A549 (cell line): ENCODE measurements at regions of chr1 and their contacts with region 1.

Region 1: GRCh38 chr1:161792740-161793139 is 26.6 kb downstream of the ATF6 start:
- DNase-seq: peak; percentile 51 to 74
- ATAC-seq: peak; percentile 91 to 93
- H3K4me3 ChIP-seq: no peak overlapping the region
- H3K27ac ChIP-seq: no peak overlapping the region
- H3K4me1 ChIP-seq: peaks cover 4% of the 10 kb centered on the region; the same call in 1 of the 3 replicates
- CTCF ChIP-seq: peak; percentile 78
- EP300 ChIP-seq: no peak
- POLR2A ChIP-seq: no peak
- RAD21 ChIP-seq: peak; percentile 84 to 89

Region 2: DNA sequence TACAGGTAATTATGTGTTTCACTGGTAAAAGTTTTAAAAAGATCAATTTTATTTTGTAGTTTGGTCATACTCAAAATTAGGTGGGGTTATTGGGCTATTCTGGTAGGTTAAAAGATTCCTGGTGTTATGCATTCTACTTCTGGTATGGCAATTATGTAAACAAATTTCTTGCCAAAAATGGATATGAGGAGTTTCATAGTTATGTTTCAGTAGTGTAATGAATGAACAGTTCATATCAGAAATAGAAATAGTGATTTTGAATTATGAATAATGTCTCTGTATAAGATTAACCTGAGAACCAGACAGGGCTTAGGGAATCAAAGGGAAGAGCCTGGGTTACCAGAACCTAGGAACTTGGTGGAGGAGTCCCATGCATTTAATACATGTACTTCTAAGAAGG is 10.7 kb before region 1 on chr1:
- CTCF ChIA-PET with region 1: interaction called, 19 read pairs
- POLR2A ChIA-PET with region 1: no interaction called
- DNase-seq: no peak
- ATAC-seq: no peak
- H3K4me3 ChIP-seq: no peak overlapping the region
- H3K27ac ChIP-seq: no peak overlapping the region
- H3K4me1 ChIP-seq: peaks cover 4% of the 10 kb centered on the region; the same call in 1 of the 3 replicates
- CTCF ChIP-seq: no peak
- EP300 ChIP-seq: no peak
- POLR2A ChIP-seq: no peak
- RAD21 ChIP-seq: no peak

Region 3: DNA sequence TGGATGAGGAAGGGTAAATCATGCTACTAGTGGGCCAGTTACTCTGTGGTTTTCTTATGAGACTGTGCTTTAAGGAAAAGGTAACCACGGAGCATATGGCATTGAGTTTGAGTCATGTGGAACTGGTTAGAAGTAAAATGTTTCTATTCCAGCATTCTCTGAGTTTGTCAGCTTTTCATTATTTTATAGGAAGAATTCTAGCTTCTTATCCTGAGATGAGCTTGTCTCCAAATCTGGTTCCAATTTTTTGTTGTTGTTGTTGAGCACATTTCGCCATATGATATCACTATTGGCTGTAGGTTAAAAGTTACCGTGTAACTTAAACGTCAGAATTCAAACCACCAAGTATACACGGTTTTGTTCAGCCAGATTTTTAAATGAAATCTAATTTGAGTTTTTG is 43.3 kb after region 1 on chr1:
- CTCF ChIA-PET with region 1: no interaction called
- POLR2A ChIA-PET with region 1: no interaction called
- DNase-seq: no peak
- ATAC-seq: no peak
- H3K4me3 ChIP-seq: no peak overlapping the region
- H3K27ac ChIP-seq: no peak overlapping the region
- H3K4me1 ChIP-seq: no peaks in the 10 kb centered on the region
- CTCF ChIP-seq: no peak
- EP300 ChIP-seq: no peak
- POLR2A ChIP-seq: no peak
- RAD21 ChIP-seq: no peak

Region 4: GRCh38 chr1:161864577-161864976 is 71.8 kb after region 1 on chr1:
- CTCF ChIA-PET with region 1: interaction called, 13 read pairs
- POLR2A ChIA-PET with region 1: no interaction called
- DNase-seq: peak in 1 of 2 experiments; percentile 13
- ATAC-seq: no peak; a peak in 1 of 6 replicates
- H3K4me3 ChIP-seq: no peak overlapping the region
- H3K27ac ChIP-seq: no peak overlapping the region
- H3K4me1 ChIP-seq: no peaks in the 10 kb centered on the region
- CTCF ChIP-seq: no peak; the same call in 2 of the 3 replicates
- EP300 ChIP-seq: no peak
- POLR2A ChIP-seq: no peak
- RAD21 ChIP-seq: peak; percentile 28 to 35; a peak in 3 of 5 replicates

Region 5: DNA sequence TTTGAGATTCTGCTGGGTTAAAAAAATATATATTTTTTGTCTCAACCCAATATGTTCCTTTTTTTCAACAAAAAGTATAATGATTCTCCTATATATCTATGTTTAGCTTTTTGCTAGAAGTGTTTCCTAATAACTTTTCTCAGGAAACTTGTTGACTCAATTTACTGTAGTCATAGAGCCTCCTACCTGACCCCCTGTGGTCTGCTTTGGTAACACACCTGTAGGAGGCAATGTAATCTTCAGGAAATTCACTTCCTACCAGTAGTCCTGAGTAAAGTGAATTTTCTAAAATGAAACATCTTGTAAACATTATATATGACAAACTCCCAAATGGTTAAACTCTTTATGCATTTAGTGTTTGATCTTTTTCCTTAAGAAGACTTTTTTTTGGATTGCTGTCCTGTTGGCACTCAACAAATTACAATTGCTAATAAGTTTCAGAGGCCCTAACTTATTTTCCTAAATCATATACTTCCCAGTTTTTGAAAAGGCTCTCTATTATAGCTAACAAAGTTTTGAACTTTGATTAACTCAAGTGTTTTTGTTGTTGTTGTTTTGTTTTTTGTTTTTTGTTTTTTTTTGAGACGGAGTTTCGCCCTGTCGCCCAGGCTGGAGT is 112.6 kb after region 1 on chr1:
- CTCF ChIA-PET with region 1: interaction called, 10 read pairs
- POLR2A ChIA-PET with region 1: no interaction called
- DNase-seq: peak; percentile 29 to 50
- ATAC-seq: peak; percentile 80 to 81
- H3K4me3 ChIP-seq: no peak overlapping the region
- H3K27ac ChIP-seq: no peak overlapping the region
- H3K4me1 ChIP-seq: peaks cover 17% of the 10 kb centered on the region
- CTCF ChIP-seq: peak; percentile 44; the same call in 2 of the 3 replicates
- EP300 ChIP-seq: no peak
- POLR2A ChIP-seq: no peak
- RAD21 ChIP-seq: peak; percentile 28 to 36; a peak in 3 of 5 replicates

Region 6: GRCh38 chr1:162023547-162024501 is 231.1 kb after region 1 on chr1 and contains the start of gene OLFML2B:
- CTCF ChIA-PET with region 1: interaction called, 262 read pairs
- POLR2A ChIA-PET with region 1: no interaction called
- DNase-seq: peak; percentile 70 to 84
- ATAC-seq: peak; percentile 96 to 97
- H3K4me3 ChIP-seq: peak within 1 kb of the TSS; percentile 68
- H3K27ac ChIP-seq: peak within 1 kb of the TSS; percentile 53 to 80; a peak in 5 of 6 replicates
- H3K4me1 ChIP-seq: peaks cover 5% of the 10 kb centered on the region
- CTCF ChIP-seq: peak; percentile 45
- EP300 ChIP-seq: no peak
- POLR2A ChIP-seq: no peak
- RAD21 ChIP-seq: peak; percentile 48 to 61
- polyA plus RNA-seq, gene OLFML2B: 0.10 and 0.21 TPM in 2 replicates

Region 7: DNA sequence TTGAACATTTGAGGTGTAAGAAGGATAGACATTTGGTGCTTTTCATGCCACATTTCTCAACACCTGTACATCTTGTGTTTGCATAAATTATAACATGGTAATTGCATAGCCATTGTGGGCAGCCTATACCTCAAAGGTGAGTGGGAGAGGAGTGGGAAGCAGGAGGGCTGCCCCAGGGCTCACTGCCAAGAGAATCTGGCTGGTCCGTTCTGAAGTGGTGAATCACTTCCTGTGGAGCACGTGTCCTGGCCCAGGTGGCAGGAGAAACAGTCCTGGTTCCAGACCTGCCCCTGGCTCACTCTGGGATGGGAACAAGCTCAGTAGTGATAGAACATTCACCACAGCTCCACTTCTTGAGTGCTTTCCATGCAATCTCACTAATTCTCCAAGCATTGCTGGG is 242.5 kb after region 1 on chr1:
- CTCF ChIA-PET with region 1: interaction called, 262 read pairs
- POLR2A ChIA-PET with region 1: interaction called, 15 read pairs
- DNase-seq: no peak
- ATAC-seq: no peak
- H3K4me3 ChIP-seq: no peak overlapping the region
- H3K27ac ChIP-seq: no peak overlapping the region
- H3K4me1 ChIP-seq: peaks cover 6% of the 10 kb centered on the region; the same call in 2 of the 3 replicates
- CTCF ChIP-seq: no peak
- EP300 ChIP-seq: no peak
- POLR2A ChIP-seq: no peak
- RAD21 ChIP-seq: no peak

Region 8: GRCh38 chr1:162040681-162041080 is 247.9 kb after region 1 on chr1:
- CTCF ChIA-PET with region 1: interaction called, 262 read pairs
- POLR2A ChIA-PET with region 1: interaction called, 15 read pairs
- DNase-seq: peak in 1 of 2 experiments; percentile 44
- ATAC-seq: peak in 1 of 2 experiments; percentile 64; a peak in 3 of 6 replicates
- H3K4me3 ChIP-seq: no peak overlapping the region
- H3K27ac ChIP-seq: no peak overlapping the region
- H3K4me1 ChIP-seq: no peaks in the 10 kb centered on the region
- CTCF ChIP-seq: peak; percentile 28
- EP300 ChIP-seq: no peak
- POLR2A ChIP-seq: no peak
- RAD21 ChIP-seq: peak in 1 of 2 experiments; percentile 33; a peak in 1 of 5 replicates